Activated CD4-positive, alpha-beta T cell treated with anti-CD3 and anti-CD28 coated beads for 36 hours (primary cell): ENCODE measurements at regions of chr12 and their contacts with region 1.

Region 1: GRCh38 chr12:64759035-64759901 is at the start of gene GNS:
- DNase-seq: peak; percentile 97
- ATAC-seq: peak; percentile 88
- H3K4me3 Mint-ChIP-seq: peak within 1 kb of the TSS; percentile 88
- H3K27ac Mint-ChIP-seq: peak within 1 kb of the TSS; percentile 96
- H3K4me1 Mint-ChIP-seq: peaks cover 46% of the 10 kb centered on the region
- H3K27me3 Mint-ChIP-seq: no peaks in the 10 kb centered on the region
- total RNA-seq, gene GNS: 19.9 to 21.9 TPM

Region 2: DNA sequence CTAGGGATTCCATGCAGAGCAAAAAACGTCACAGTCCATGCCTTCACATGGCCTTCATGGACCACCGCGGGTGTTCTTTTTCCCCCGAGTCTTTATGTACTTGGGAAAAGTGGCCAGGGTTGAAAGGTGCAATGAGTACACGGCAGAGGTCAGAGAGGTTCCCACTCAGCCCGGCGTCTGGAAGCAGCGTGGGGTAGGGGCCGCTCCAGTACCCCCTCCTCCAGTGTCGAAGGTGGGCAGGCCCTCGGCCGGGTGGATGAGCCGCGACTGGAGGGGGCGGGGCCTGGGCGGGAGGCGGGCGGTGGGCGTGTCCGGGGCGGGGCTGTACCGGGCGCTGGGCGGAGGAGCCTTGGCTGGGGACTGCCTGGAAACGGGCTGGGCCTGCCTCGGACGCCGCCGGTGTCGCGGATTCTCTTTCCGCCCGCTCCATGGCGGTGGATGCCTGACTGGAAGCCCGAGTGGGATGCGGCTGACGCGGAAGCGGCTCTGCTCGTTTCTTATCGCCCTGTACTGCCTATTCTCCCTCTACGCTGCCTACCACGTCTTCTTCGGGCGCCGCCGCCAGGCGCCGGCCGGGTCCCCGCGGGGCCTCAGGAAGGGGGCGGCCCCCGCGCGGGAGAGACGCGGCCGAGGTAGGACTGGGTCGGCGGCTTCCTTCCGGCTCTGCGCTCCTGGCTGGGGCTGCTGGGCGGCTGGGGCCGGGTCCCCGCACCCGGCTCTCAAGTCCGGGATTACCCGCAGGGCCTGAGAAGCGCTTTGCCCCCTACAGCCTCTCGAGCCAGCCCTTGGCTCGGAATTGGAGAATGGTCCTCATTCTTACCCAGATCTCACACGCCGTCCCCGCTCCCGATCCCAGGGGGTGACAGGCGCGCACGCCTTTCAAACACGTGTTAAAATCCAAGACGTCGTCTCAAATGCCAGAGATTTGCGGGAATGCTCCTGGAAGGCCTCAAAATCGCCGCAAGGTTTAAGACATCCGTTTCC is 979.5 kb before region 1 on chr12 and contains the start of gene RXYLT1:
- CTCF ChIA-PET with region 1: no interaction called
- POLR2A ChIA-PET with region 1: no interaction called
- intact Hi-C with region 1: loop called in 1 of 2 experiments (anchors 5 kb)
- DNase-seq: peak; percentile 92
- ATAC-seq: peak; percentile 94
- H3K4me3 Mint-ChIP-seq: peak within 1 kb of the TSS; percentile 94
- H3K27ac Mint-ChIP-seq: peak within 1 kb of the TSS; percentile 95
- H3K4me1 Mint-ChIP-seq: peaks cover 10% of the 10 kb centered on the region
- H3K27me3 Mint-ChIP-seq: no peaks in the 10 kb centered on the region
- total RNA-seq, gene RXYLT1: 14.8 to 15.6 TPM

Region 3: GRCh38 chr12:64403707-64404469 is 355.4 kb before region 1 on chr12 and contains the start of gene XPOT:
- CTCF ChIA-PET with region 1: no interaction called
- POLR2A ChIA-PET with region 1: interaction called, 3 read pairs
- intact Hi-C with region 1: loop called (anchors 1 kb)
- DNase-seq: peak; percentile 97
- ATAC-seq: peak; percentile 90
- H3K4me3 Mint-ChIP-seq: peak within 1 kb of the TSS; percentile 97
- H3K27ac Mint-ChIP-seq: peak within 1 kb of the TSS; percentile 96
- H3K4me1 Mint-ChIP-seq: peaks cover 38% of the 10 kb centered on the region
- H3K27me3 Mint-ChIP-seq: no peaks in the 10 kb centered on the region
- total RNA-seq, gene XPOT: 179 to 187 TPM

Region 4: GRCh38 chr12:64625243-64626077 is 133.8 kb before region 1 on chr12:
- CTCF ChIA-PET with region 1: no interaction called
- POLR2A ChIA-PET with region 1: no interaction called
- intact Hi-C with region 1: loop called in 1 of 2 experiments (anchors 5 kb)
- DNase-seq: peak; percentile 58
- ATAC-seq: peak; percentile 93
- H3K4me3 Mint-ChIP-seq: peak overlapping the region; percentile 68
- H3K27ac Mint-ChIP-seq: peak overlapping the region; percentile 97
- H3K4me1 Mint-ChIP-seq: peaks cover 72% of the 10 kb centered on the region
- H3K27me3 Mint-ChIP-seq: no peaks in the 10 kb centered on the region

Region 5: DNA sequence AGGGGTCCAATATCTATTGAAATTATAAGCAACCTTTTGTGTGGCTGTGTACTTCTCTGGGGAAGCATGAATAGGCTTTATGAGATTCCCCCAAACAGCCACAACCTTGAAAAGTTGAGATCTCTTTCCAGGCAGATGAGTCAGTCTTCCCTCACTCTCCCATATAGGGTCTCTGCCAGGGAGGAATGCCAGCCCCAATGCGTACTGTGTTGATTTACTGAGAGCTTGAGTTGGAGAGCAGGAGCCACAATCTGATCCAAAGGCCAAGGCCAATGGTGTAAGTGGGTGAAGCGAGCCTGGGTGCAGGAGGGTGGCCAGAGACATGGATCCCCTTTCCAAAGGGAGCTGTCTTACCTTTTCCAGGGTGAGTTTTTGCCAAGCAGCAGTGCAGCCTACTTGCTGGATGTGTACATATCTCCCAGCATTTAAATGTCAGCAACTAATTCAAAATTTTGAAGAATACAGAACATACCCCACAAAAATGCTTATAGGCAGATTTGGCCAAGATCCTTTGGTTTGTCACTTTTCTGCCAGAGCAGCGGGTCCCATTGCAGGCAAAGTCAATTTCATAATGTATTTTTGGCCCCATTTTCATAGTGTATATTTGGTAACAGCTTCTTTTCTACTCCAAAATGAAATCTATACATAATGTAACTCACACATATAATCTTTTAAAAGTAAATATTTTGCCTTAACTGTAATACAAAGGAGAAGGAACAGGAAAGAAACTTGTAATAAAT is 153.4 kb after region 1 on chr12:
- CTCF ChIA-PET with region 1: no interaction called
- POLR2A ChIA-PET with region 1: no interaction called
- intact Hi-C with region 1: no loop called
- DNase-seq: no peak
- ATAC-seq: no peak
- H3K4me3 Mint-ChIP-seq: no peak overlapping the region
- H3K27ac Mint-ChIP-seq: no peak overlapping the region
- H3K4me1 Mint-ChIP-seq: no peaks in the 10 kb centered on the region
- H3K27me3 Mint-ChIP-seq: peaks cover 6% of the 10 kb centered on the region

Region 6: GRCh38 chr12:65093606-65094005 is 334.3 kb after region 1 on chr12:
- CTCF ChIA-PET with region 1: no interaction called
- POLR2A ChIA-PET with region 1: no interaction called
- intact Hi-C with region 1: no loop called
- DNase-seq: no peak
- ATAC-seq: no peak
- H3K4me3 Mint-ChIP-seq: no peak overlapping the region
- H3K27ac Mint-ChIP-seq: no peak overlapping the region
- H3K4me1 Mint-ChIP-seq: no peaks in the 10 kb centered on the region
- H3K27me3 Mint-ChIP-seq: peaks cover 21% of the 10 kb centered on the region

Region 7: DNA sequence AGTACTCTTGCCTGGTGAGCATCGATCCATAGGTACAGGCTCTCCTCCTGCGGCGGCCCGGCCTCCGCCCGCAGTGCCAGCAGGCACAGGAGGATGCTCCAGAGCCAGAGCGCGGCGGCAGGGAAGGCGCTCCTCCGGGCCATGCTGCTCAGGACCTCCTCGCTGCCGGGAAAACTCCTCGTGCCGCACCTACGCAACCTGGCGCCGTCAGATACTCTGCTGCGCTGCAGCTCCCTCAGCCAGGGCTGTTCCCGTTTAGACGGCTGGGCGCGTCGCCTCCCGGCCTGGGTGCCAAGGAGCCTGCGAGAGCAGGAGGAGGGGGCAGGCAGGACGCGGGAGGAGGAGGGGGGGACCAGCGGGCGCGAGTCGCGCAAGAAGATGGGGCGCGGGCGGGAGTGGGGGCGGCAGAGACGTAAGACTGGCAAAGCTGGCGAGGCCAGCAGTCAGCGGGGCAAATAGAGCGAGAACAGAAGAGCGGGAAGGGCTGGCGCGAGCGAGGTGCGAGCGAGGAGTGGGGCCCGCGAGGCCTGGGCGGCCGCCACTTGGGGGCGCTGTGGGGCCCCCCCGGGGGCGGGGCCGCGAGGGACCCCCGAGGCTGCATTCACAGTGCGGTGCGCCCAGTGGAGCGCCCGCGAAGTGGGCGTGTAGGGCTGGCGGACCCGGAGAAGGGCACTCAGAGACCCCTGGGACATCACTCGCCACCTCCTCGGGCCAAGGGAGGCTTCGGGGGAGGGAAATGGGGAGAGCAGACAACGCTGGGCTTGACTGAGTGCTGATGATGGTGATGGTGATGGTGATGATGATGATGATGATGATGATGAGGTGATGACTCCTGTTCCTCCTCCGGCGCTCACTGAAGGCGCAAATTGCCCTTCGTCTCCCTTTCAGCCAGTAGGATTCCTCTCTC is 362.0 kb after region 1 on chr12 and contains the start of gene WIF1:
- CTCF ChIA-PET with region 1: no interaction called
- POLR2A ChIA-PET with region 1: no interaction called
- intact Hi-C with region 1: no loop called
- DNase-seq: peak; percentile 56
- ATAC-seq: peak; percentile 82
- H3K4me3 Mint-ChIP-seq: peak within 1 kb of the TSS; percentile 32
- H3K27ac Mint-ChIP-seq: no peak within 1 kb of the TSS
- H3K4me1 Mint-ChIP-seq: peaks cover 6% of the 10 kb centered on the region
- H3K27me3 Mint-ChIP-seq: peaks cover 31% of the 10 kb centered on the region
- total RNA-seq, gene WIF1: not detected

Region 8: GRCh38 chr12:66169221-66170170 is 1410.2 kb after region 1 on chr12 and contains the start of gene TMBIM4:
- CTCF ChIA-PET with region 1: no interaction called
- POLR2A ChIA-PET with region 1: no interaction called
- intact Hi-C with region 1: loop called in 1 of 2 experiments (anchors 1 kb)
- DNase-seq: peak; percentile 93
- ATAC-seq: peak; percentile 86
- H3K4me3 Mint-ChIP-seq: peak within 1 kb of the TSS; percentile 86
- H3K27ac Mint-ChIP-seq: peak within 1 kb of the TSS; percentile 99
- H3K4me1 Mint-ChIP-seq: peaks cover 41% of the 10 kb centered on the region
- H3K27me3 Mint-ChIP-seq: no peaks in the 10 kb centered on the region
- total RNA-seq, gene TMBIM4: 41.4 to 44.6 TPM